Motor neuron (in vitro differentiated cells): ENCODE measurements at regions of chr7 and their contacts with region 1.

Region 1: DNA sequence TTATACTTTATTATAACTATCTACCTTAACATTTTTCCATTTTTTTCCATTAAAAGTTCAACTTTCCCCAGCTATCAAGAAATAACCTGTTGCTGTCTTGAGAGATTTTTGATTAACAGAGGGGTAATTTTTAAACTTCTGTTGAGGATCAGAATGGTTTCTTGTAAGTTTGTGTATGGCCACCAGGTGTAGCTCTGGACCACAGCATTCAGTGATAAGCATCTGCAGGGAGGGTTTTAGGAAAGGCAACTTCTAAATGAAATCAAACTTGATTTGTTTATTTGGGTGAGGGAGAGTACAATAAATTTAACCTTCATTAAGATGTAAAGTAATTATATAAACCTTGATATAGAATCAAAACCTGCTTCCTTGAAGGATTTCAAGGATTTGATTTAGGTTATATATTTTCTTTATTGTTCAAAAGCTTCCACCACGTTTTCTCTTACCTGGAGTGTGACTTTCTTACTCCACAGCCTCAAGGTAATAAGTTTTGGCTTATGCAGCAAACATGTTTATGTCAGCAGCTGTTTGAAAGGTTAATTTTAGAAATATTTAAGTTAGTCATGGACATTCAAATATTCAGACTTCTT is 153.3 kb downstream of the STK31 start:
- ATAC-seq: peak in 4 of 8 experiments; percentile 38 to 67 (median 52)
- H3K4me3 ChIP-seq: no peak overlapping the region
- H3K27ac ChIP-seq: no peak overlapping the region
- H3K4me1 ChIP-seq: no peaks in the 10 kb centered on the region

Region 2: GRCh38 chr7:23767514-23767913 is 95.8 kb before region 1 on chr7:
- in situ Hi-C with region 1: no loop called
- ATAC-seq: no peak
- H3K4me3 ChIP-seq: no peak overlapping the region
- H3K27ac ChIP-seq: no peak overlapping the region
- H3K4me1 ChIP-seq: no peaks in the 10 kb centered on the region

Region 3: DNA sequence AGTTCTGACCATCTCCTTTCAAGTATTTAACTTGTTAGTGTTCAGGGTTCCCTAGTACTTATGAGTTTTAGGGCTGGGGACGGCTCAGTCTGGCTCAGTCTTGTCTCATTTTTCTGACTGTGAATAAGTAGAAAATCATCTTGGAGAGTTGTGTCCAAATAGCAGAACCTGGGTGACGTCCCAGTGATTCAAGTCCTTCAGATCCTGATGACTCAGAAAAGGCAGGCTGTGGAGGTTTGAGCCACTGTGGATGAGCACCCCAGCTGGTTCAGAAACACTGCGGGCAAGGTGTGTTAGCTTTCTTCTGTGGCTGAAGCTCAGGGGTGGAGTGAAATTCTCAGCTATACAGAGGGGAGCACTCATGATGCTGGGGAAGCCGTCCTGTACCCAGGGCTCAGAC is 266.3 kb after region 1 on chr7:
- in situ Hi-C with region 1: no loop called
- ATAC-seq: no peak
- H3K4me3 ChIP-seq: no peak overlapping the region
- H3K27ac ChIP-seq: no peak overlapping the region
- H3K4me1 ChIP-seq: no peaks in the 10 kb centered on the region

Region 4: DNA sequence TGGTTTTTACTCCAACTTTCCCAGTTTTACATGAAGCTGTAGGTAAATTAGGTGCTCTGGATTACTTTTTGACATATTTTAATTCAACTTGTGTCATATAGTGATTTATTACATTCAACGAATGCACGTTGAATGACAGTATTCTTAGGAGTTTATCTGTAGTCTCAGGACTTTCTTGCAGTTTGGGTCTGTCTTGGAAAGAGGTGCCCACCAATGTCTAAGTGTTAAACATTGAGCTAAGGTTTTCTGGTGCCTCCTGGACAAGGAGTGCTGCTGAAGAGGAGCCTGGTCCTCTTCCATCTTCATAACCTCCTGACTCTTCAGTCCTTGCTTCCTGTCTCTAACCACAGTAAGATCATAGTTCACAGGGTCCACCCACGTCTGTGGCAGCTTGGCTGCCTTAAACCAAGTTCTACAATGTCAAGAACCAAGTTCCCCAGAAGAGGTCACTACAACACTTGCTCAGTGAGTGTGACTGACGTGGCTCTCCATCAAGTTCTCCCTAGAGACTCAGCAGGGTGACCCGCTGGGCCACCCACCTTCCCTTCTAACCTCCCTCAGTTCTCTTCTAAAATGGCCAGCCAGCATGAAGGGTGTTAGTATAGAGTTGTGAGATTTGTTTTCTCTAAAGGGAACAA is 426.8 kb after region 1 on chr7:
- in situ Hi-C with region 1: loop called in 1 of 9 experiments (anchors 25 kb)
- ATAC-seq: peak; percentile 42 to 97 (median 64)
- H3K4me3 ChIP-seq: no peak overlapping the region
- H3K27ac ChIP-seq: no peak overlapping the region
- H3K4me1 ChIP-seq: peaks cover 2 to 3% of the 10 kb centered on the region in 2 donors

Region 5: DNA sequence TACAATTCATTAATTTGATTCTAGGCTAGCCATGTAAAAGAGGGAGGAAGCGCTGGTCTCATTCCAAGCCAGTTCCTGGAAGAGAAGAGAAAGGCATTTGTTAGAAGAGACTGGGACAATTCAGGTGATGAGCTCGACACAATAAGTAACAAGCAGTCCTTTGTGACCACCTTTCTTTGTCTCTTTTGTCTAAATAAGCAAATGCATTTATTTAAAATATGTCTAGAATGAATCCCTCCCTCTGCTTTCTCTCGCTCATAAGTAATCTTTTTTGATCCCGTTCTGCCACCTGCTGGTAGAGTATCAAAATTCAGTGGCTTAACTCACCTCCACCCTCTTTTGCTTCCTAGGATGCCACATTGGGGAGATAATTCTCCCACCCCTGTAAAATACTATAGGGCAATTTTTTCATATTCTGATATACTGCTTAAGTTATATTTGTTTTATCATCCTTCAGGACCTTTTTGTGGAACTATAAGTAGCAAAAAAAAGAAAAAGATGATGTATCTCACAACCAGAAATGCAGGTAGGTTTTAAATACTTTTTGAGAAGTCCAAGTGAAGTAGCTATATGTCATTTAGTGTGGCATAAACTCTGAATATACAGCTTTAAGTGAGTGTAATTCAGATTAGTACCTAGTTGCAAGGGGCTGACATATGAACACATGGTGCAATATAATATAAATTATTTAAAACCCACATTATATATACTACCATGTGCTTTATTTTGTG is 802.4 kb after region 1 on chr7:
- in situ Hi-C with region 1: loop called in 2 of 9 experiments (anchors 25 kb)
- ATAC-seq: peak in 7 of 8 experiments; percentile 53 to 81 (median 67)
- H3K4me3 ChIP-seq: no peak overlapping the region
- H3K27ac ChIP-seq: no peak overlapping the region
- H3K4me1 ChIP-seq: peaks cover 0 to 2% of the 10 kb centered on the region in 2 donors